OCI-LY7 (cell line): ENCODE measurements at regions of chr13 and their contacts with region 1.

Region 1: DNA sequence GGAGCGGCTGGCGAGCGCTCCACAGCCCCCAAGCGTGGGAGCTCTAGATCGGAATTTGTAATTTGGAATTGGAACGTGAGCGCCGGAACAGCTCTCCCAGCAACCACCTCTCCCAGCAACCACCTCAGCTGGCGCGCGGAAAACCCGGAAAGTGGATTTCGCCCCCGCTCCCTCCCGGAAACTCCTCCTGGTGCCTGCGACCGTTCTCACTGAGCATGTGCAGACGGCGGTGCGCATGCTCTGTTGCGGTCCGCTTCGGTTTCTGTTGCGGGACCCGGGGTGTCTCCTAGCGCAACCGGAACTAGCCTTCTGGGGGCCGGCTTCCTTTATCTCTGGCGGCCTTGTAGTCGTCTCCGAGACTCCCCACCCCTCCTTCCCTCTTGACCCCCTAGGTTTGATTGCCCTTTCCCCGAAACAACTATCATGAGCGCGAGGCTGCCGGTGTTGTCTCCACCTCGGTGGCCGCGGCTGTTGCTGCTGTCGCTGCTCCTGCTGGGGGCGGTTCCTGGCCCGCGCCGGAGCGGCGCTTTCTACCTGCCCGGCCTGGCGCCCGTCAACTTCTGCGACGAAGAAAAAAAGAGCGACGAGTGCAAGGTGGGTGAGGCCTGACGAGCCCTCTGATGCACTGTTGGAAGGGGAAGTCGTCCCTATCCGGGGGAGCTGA is at the start of gene TM9SF2:
- DNase-seq: peak; percentile 91
- H3K4me3 ChIP-seq: peak within 1 kb of the TSS; percentile 97
- H3K27ac ChIP-seq: peak within 1 kb of the TSS; percentile 73
- H3K4me1 ChIP-seq: peaks cover 58% of the 10 kb centered on the region
- CTCF ChIP-seq: no peak
- total RNA-seq, gene TM9SF2: 16.3 and 17.8 TPM in 2 replicates

Region 2: DNA sequence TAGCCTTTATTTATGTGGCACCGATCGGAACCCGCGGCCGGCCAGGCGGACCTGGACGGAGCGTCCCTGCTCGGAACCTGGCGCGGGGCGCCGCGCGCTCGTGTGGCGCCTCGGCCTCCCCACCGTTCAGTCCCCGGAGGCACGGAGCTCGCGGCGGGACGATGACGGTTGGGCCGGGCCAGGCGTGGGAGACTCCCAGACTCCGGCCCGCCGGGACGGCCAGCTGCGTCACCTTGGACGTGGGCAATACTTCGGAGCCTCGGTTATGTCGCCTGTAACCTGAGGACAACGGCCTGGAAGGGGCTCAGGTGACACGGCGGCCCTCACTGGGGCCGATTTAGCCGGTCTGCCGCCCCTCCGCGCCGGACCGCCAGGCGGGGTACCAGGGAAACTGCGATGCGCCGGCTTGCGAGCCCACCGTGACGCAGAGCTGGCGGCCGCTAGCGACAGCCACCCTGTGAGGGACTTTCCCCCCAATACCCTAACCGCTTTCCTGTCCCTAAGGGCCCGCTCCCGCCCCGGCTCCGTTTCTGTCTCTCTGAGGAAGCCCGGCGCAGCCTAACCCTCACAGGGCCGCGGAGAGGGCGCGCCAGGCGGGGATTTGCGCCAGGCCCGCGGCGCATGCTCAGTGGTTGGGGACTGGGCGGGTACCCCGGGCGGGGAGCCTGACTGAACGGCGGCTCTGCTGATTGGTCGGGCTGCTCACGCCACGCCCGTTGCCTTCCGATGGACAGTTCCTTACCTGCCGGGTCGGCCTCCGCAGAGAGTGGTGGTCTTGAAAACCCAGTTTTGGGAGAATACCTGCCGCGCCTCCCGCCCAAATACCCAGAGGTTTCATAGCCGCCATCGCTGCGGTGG is 414.0 kb before region 1 on chr13:
- CTCF ChIA-PET with region 1: no interaction called
- POLR2A ChIA-PET with region 1: no interaction called
- intact Hi-C with region 1: loop called (anchors 5 kb)
- DNase-seq: peak; percentile 88
- H3K4me3 ChIP-seq: peak overlapping the region; percentile 82
- H3K27ac ChIP-seq: peak overlapping the region; percentile 84
- H3K4me1 ChIP-seq: peaks cover 31% of the 10 kb centered on the region
- CTCF ChIP-seq: no peak

Region 3: DNA sequence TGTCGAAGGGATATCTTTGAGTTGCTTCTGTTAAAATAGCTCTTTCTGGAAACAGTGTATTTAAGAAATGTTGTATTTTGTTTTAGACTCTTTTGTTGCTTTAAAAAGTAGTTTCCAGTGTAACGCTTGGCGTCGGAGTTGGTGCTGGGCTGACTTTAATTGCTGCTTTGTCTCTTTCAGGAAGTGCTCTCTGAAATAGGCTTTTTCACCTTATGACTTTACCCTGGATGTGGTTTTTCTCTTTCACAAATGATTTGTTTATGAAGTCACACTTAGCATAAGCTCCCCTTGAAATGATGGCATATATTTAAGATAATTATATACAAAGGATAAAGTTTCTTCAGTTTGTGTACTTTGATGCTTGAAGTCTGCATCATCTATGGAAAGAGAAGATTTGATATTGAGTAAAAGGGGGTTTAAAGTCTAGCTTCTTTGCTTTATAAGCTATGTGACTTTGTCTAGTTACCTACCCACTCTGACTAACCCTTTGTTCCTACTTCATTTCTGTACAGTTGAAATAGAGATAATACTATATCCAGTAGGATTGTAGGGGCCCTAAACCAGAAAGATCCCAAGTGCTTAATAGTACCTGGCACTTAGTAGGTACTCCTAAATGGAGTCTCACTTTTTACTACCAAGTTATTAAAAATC is 243.0 kb before region 1 on chr13 and contains the start of gene GPR18:
- CTCF ChIA-PET with region 1: no interaction called
- POLR2A ChIA-PET with region 1: no interaction called
- intact Hi-C with region 1: loop called (anchors 10 kb)
- DNase-seq: peak; percentile 66
- H3K4me3 ChIP-seq: peak within 1 kb of the TSS; percentile 76
- H3K27ac ChIP-seq: peak within 1 kb of the TSS; percentile 97
- H3K4me1 ChIP-seq: peaks cover 64% of the 10 kb centered on the region
- CTCF ChIP-seq: no peak
- total RNA-seq, gene GPR18: 6.6 and 13.7 TPM in 2 replicates

Region 4: DNA sequence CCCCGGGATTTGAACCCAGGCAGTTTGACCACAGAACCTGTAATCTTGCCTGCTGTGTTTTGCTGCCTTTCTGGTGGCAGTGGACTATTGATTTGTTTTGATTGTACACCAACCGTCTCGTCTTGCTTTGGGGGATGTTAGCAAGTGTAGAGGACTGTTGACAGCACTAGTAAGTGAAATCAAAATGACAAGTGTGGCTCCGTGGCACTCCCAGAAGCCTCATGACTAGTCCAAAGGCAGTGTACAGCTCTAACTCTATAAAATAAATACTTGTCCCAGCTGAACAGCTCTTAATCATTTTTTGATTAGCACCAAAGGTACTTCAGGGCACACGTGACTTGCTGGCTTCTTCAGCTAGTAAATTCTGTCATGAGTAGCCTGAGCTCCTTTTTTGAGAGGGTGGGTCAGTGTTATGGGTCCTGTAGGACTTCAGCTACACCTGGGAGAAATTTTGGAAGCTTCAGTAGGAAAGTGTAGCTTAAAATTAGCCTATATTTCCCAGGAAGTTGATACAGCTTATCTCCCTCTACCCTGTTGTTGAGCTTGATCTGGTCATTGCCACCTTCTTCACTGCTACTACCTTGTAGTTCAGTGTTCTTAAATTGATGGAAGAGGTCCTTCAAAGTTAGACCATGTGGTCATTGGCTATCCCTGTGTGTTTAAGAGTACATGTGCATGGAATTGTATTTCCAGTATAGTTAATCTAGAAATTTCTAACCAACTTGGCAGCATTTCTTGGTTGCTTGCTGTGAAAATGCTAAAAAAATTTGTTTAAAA is 15.0 kb after region 1 on chr13:
- CTCF ChIA-PET with region 1: no interaction called
- POLR2A ChIA-PET with region 1: interaction called, 10 read pairs
- intact Hi-C with region 1: no loop called
- DNase-seq: no peak
- H3K4me3 ChIP-seq: no peak overlapping the region
- H3K27ac ChIP-seq: no peak overlapping the region
- H3K4me1 ChIP-seq: no peaks in the 10 kb centered on the region
- CTCF ChIP-seq: no peak

Region 5: GRCh38 chr13:99721606-99722337 is 220.5 kb after region 1 on chr13:
- CTCF ChIA-PET with region 1: no interaction called
- POLR2A ChIA-PET with region 1: no interaction called
- intact Hi-C with region 1: no loop called
- DNase-seq: no peak
- H3K4me3 ChIP-seq: no peak overlapping the region
- H3K27ac ChIP-seq: no peak overlapping the region
- H3K4me1 ChIP-seq: no peaks in the 10 kb centered on the region
- CTCF ChIP-seq: no peak